ENCODE measurements at regions of chr17 and their contacts with region 1.

Region 1: GRCh38 chr17:79741751-79742588 is 11.2 kb downstream of the ENPP7 start:
- DNase-seq: peak; percentile 68 to 80
- ATAC-seq: peak; percentile 56 to 76 (median 71)
- H3K4me3 ChIP-seq: peak overlapping the region in 5 of 10 donors; percentile 11 to 31 (median 17)
- H3K27ac ChIP-seq: no peak overlapping the region
- H3K4me1 ChIP-seq: peaks cover 3 to 20% (median 8%) of the 10 kb centered on the region in 9 donors
- H3K27me3 ChIP-seq: peaks cover 20 to 82% (median 72%) of the 10 kb centered on the region in 7 donors
- CTCF ChIP-seq: peak; percentile 90 to 98 (median 95)

Region 2: DNA sequence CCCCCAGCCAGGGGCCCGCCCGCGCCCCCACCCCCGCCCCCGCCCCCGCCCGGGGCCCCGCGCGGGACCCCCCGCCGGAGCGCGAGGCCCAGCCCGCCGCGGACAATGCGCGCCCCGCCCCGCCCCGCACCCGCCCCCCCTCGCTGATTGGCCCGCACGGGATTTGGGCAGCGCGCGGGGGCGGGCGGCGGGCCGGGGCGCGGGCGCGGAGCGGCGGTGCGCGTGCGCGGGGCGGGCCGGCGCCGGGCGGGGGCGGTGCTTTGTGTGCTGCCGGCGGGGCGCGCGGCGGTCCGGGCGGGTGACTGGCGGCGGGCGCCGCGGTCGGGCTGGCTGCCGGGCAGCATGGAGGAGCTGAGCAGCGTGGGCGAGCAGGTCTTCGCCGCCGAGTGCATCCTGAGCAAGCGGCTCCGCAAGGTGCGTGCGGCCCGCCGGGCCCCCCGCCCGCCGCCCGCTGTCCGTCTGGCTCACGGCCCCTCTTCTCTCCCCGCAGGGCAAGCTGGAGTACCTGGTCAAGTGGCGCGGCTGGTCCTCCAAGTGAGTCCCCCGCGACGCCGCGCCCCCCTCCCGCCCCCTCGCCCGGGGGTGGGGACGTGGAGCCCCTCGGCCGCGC is 36.0 kb after region 1 on chr17 and contains the start of gene CBX2:
- intact Hi-C with region 1: loop called in 2 of 10 experiments (anchors 2 to 5 kb)
- DNase-seq: peak; percentile 78 to 88
- ATAC-seq: peak; percentile 38 to 82 (median 70)
- H3K4me3 ChIP-seq: peak within 1 kb of the TSS; percentile 63 to 87 (median 77)
- H3K27ac ChIP-seq: peak within 1 kb of the TSS; percentile 2 to 85 (median 77)
- H3K4me1 ChIP-seq: peaks cover 0 to 48% (median 21%) of the 10 kb centered on the region in 9 donors
- H3K27me3 ChIP-seq: peaks cover 0 to 79% (median 38%) of the 10 kb centered on the region in 7 donors
- CTCF ChIP-seq: no peak
- total RNA-seq, gene CBX2: 1.5 to 3.9 (median 2.7) TPM

Measured in heart right ventricle (tissue), 16 donors.